Naive thymus-derived CD8-positive, alpha-beta T cell (primary cell): ENCODE measurements at regions of chr14 and their contacts with region 1.

Region 1: DNA sequence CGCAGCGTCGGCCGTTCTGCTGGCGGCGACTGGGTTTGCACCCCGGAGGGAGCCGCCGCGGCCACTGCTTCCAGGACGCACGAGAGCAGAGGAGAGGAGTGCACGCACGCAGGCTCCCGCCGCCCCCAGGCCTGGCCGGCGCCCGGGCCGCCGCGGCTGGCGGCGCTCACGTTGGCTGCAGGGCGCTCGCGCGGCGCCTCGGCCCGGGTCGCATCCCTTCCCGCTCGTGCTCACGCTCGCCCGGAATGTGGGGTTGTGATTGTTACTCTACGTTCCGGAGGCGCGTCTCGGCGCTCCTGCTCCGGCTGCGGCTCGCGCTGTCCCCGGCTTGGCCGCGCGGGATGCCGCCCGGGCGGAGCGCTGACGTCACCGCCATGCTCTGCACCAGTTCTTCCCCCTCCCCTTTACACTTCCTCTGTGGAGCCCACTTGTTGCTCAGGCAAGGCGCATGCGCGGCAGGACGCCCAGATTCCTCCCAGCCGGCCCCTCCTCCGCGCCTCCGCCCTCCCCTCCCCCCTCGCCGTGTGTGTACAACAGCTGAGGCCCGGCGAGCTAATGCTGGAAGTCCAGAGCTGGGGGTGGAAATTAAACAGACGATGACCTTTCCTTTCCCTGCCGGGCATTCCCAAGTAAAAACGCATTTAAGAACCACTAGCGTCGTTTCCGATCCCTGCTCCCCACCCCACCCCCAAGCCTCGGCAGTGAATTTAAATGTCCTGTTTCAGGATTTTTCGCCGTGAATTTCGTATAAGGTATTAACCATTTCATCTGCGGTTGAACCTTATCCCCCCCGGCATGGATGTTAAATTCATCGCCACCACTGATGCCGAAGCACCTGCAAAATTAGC is at the start of gene IRF2BPL:
- DNase-seq: peak; percentile 91 to 97 (median 94)
- ATAC-seq: peak; percentile 66 to 72
- H3K4me3 Mint-ChIP-seq: peak within 1 kb of the TSS; percentile 90 to 99 (median 96)
- H3K27ac Mint-ChIP-seq: peak within 1 kb of the TSS; percentile 95 to 99 (median 98)
- H3K4me1 Mint-ChIP-seq: peaks cover 32 to 64% (median 61%) of the 10 kb centered on the region in 4 donors
- H3K27me3 Mint-ChIP-seq: peaks cover 0 to 3% (median 0%) of the 10 kb centered on the region in 5 donors
- polyA plus RNA-seq, gene IRF2BPL: 1.9 to 3.3 (median 3.2) TPM

Region 2: GRCh38 chr14:76918751-76919543 is 109.7 kb before region 1 on chr14:
- POLR2A ChIA-PET with region 1: interaction called, 12 read pairs
- DNase-seq: no peak
- ATAC-seq: no peak
- H3K4me3 Mint-ChIP-seq: peak overlapping the region in 4 of 10 donors; percentile 36 to 52 (median 48)
- H3K27ac Mint-ChIP-seq: peak overlapping the region in 1 of 10 donors; percentile 35
- H3K4me1 Mint-ChIP-seq: peaks cover 7 to 54% (median 46%) of the 10 kb centered on the region in 4 donors
- H3K27me3 Mint-ChIP-seq: no peaks in the 10 kb centered on the region

Region 3: DNA sequence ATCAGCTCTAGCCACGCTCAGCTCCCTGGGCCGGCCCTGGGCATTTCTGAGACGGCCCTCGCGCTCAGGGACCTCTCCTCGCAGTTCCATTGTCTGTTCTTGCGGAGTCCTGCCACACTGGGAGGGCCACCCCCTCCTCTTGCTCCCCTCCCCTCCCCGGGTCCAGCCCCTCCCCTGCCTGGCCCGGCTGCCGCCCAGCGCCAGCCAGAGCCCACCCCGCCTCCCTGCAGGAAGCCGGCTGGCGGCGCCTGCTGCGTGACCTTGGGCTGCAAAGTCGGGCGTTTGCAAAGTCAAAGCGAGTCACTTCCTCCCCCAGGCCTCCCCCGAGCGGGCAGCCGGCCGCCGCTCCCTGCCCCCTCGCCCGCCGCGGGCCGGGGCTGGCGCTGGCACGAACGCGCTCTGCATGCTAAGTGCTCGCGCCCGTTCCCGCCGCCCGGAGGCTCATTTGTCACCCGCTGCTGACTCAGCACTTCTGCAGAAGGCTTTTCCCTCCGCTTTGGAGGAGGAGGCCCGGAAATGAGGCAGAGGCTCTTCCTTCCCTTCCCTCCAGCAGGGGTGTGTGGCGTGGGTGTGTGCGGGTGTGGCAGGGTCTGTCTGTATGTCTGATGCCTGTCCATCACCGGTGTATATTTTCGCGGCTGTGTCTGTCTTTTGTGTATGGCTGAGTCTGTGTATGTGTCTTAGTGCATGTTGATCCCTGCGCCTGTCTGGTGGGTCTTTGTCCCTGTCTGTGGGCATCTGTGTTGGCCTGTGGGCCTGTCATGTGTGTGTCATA is 72.1 kb before region 1 on chr14:
- POLR2A ChIA-PET with region 1: interaction called, 86 read pairs
- DNase-seq: peak; percentile 66 to 88 (median 77)
- ATAC-seq: peak; percentile 53 to 55
- H3K4me3 Mint-ChIP-seq: peak overlapping the region; percentile 79 to 92 (median 89)
- H3K27ac Mint-ChIP-seq: peak overlapping the region; percentile 93 to 99 (median 96)
- H3K4me1 Mint-ChIP-seq: peaks cover 23 to 78% (median 72%) of the 10 kb centered on the region in 4 donors
- H3K27me3 Mint-ChIP-seq: no peaks in the 10 kb centered on the region

Region 4: DNA sequence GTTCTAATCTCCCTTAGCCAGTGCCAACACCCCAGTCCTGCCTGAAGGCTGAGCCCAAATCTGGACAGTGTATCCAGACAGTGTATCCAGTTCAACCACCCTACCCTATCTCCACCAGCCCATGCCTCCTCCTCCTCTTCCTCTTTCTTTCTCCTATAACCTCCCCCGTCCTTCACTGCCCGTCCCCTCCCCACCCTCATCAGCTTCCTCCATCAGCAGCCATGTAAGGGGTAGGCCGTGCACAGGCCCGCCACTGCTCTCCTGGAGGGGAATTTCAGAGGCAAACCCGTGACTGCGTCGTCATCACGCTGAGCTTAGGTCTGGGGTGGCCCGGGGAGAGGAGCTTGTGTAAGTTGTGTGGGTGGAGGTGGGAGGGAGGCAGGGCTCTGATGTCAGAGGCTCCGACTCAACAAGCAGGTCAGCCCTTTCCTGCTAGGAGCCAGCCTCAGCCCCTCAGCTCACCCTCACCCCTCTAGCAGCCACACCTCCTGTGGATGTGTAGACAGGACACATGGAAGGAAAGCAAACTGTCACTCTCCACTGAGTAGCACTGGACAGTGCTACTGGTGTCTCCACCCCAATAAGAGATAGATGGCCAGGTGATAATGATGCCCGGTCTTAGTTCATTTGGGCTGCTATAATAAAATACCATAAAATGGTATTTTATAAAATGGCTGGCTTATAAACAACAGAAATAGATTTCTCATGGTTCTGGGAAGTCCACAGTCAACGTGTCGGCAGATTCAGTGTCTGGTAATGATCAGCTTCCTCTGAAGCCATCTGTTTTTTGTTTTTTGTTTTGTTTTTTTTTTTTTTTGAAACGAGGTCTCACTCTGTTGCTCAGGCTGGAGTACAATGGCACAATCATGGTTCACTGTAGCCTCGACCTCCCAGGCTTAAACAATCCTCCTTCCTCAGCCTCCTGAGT is 50.6 kb before region 1 on chr14:
- POLR2A ChIA-PET with region 1: interaction called, 10 read pairs
- DNase-seq: peak; percentile 41 to 87 (median 74)
- ATAC-seq: peak; percentile 98 to 99
- H3K4me3 Mint-ChIP-seq: peak overlapping the region in 7 of 10 donors; percentile 26 to 51 (median 34)
- H3K27ac Mint-ChIP-seq: peak overlapping the region; percentile 43 to 92 (median 80)
- H3K4me1 Mint-ChIP-seq: peaks cover 4 to 29% (median 22%) of the 10 kb centered on the region in 4 donors
- H3K27me3 Mint-ChIP-seq: no peaks in the 10 kb centered on the region

Region 5: GRCh38 chr14:77053046-77053841 is 24.6 kb after region 1 on chr14:
- POLR2A ChIA-PET with region 1: interaction called, 309 read pairs
- DNase-seq: peak; percentile 73 to 90 (median 82)
- ATAC-seq: peak; percentile 98
- H3K4me3 Mint-ChIP-seq: no peak overlapping the region
- H3K27ac Mint-ChIP-seq: peak overlapping the region in 7 of 10 donors; percentile 40 to 83 (median 64)
- H3K4me1 Mint-ChIP-seq: peaks cover 4 to 14% (median 8%) of the 10 kb centered on the region in 4 donors
- H3K27me3 Mint-ChIP-seq: no peaks in the 10 kb centered on the region